ENCODE measurements at regions of chr6 and their contacts with region 1.

Region 1: GRCh38 chr6:68559070-68559469 is 76.0 kb upstream of the ADGRB3 start:
- DNase-seq: no peak
- CTCF ChIP-seq: no peak

Region 2: DNA sequence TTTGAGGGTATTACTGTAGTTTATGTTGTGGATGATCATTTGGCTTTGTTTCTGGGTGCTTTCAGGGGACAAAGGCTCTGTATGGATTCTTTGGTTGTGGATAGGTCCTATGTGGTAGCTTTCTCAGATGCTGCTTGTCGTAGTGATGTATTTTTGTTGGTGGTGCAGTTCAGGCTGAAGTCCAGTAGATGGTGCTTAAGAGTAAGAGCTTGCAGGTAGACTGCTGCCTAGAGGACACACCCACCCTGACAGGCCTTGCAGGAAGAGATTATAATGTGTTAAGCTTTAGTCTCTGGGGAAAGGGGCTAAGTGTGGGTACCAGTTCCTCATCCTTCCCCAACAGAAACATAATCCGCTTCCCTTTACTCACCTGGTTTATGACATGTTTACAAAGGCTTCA is 13.5 kb after region 1 on chr6:
- CTCF ChIA-PET with region 1: interaction called, 17 read pairs
- POLR2A ChIA-PET with region 1: no interaction called
- DNase-seq: peak; percentile 29
- CTCF ChIP-seq: peak; percentile 59